ENCODE measurements at regions of chr12 and their contacts with region 1.

Region 1: GRCh38 chr12:49903695-49904423 is at the start of gene FAIM2:
- DNase-seq: peak; percentile 84 to 95 (median 92)
- H3K4me3 ChIP-seq: peak within 1 kb of the TSS; percentile 56 to 89 (median 76)
- H3K27ac ChIP-seq: peak within 1 kb of the TSS; percentile 87 to 100 (median 98)
- H3K27me3 ChIP-seq: no peaks in the 10 kb centered on the region
- CTCF ChIP-seq: peak in 29 of 56 donors; percentile 3 to 58 (median 27)
- total RNA-seq, gene FAIM2: 390 to 1,056 (median 722) TPM

Region 2: GRCh38 chr12:49673446-49674317 is 230.2 kb before region 1 on chr12:
- intact Hi-C with region 1: loop called in 1 of 2 experiments (anchors 5 kb)
- DNase-seq: peak; percentile 89 to 98 (median 95)
- H3K4me3 ChIP-seq: peak overlapping the region in 48 of 59 donors; percentile 1 to 48 (median 26)
- H3K27ac ChIP-seq: peak overlapping the region; percentile 30 to 99 (median 97)
- H3K27me3 ChIP-seq: no peaks in the 10 kb centered on the region
- CTCF ChIP-seq: peak in 41 of 56 donors; percentile 7 to 64 (median 44)

Region 3: GRCh38 chr12:49945394-49946080 is 41.7 kb after region 1 on chr12:
- intact Hi-C with region 1: loop called in 1 of 2 experiments (anchors 5 kb)
- DNase-seq: peak in 9 of 10 donors; percentile 63 to 87 (median 78)
- H3K4me3 ChIP-seq: peak overlapping the region in 52 of 59 donors; percentile 5 to 61 (median 41)
- H3K27ac ChIP-seq: peak overlapping the region in 18 of 59 donors; percentile 1 to 66 (median 42)
- H3K27me3 ChIP-seq: no peaks in the 10 kb centered on the region
- CTCF ChIP-seq: peak; percentile 58 to 96 (median 86)